ENCODE measurements at regions of chr4 and their contacts with region 1.

Region 1: DNA sequence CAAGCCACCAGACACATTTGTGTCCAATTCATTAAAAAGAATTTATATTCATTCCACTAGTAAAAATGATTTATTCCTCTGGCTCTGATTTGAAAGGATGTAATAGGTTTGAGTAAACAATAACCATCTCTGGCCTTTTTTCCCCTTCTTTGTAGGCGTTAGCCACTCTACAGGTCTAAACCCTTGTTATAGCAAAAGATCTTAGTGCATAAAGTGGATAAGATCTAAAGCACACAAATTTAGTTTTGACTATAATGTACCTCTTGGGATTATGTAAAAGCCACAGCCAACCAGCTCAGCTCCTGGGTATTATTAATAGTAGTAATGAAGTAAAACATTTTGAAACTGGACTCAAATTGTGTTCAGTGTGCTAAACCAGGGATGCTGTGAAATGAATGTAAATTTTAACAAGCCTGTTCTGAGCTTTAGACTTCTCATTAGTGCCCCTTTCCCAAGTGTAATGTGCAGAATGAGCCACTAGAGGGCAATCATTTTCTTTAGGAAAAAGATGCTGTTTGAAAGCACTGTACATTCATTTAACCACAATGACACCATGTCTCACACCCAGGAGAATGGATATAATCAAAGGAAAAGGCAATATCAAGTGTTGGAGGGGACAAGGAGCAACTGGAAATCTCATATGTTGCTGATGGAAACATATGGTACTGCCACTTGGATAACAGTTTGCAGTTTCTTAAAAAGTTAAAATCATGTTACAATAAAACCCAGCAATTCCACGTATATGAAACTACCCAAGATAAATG is 69.7 kb downstream of the KLHL8 start:
- DNase-seq: peak; percentile 45
- CTCF ChIP-seq: peak; percentile 84

Region 2: DNA sequence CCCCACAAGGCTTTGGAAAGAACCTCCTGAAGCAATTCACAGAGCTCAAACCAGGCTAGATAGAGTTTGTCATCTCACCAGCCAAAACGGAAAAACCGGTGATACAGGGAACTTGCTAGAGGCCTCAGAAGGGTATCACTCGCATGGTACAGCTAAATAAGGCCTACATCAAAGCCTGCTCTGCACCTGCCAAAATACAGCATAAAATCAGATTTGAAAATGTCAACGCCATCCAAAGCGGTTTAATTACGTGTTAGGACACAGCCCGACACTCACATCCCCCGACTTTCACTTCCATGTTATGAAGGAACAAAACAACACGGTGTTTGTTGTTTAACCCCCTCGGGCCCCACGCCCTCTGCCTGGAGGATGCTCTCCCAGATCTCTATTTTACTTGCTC is 855.8 kb before region 1 on chr4:
- CTCF ChIA-PET with region 1: no interaction called
- POLR2A ChIA-PET with region 1: no interaction called
- DNase-seq: peak; percentile 7
- CTCF ChIP-seq: no peak

Region 3: GRCh38 chr4:87133183-87133582 is 17.5 kb before region 1 on chr4:
- CTCF ChIA-PET with region 1: interaction called, 20 read pairs
- POLR2A ChIA-PET with region 1: no interaction called
- DNase-seq: no peak
- CTCF ChIP-seq: no peak

Region 4: DNA sequence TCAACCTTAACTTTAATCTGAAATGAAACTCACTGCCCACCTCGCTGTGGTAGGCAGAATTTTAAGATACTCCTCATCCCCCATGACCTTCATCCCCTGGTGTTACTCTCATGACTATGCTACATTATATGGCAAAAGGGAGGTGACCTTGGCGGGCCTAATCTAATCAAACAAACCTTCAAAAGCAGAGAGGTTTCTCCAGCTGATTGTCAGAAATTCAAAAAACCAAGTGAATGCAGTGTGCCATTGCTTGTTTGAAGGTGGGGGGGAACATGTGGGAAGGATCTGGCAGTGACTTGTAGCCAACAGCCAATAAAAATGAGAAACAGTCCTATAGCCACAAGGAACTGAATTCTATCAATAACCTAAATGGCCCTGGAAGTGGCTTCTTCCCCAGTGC is 21.3 kb after region 1 on chr4:
- CTCF ChIA-PET with region 1: interaction called, 11 read pairs
- POLR2A ChIA-PET with region 1: no interaction called
- DNase-seq: no peak
- CTCF ChIP-seq: no peak

Region 5: DNA sequence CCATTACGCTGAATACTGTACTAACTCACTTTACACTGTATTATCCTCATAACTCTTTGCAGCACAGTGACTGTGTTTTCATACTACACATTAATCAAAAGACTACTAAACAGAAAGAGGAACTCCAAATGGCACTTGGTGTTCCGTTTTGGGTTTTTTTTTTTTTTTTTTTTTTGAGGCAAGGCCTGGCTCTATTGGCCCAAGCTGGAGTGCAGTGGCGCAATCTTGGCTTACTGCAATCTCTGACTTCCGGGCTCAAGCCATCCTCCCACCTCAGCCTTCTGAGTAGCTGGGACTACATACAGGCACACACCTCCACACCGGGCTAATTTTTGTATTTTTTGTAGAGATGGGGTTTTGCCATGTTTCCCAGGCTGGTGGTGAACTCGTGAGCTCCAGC is 59.0 kb after region 1 on chr4:
- CTCF ChIA-PET with region 1: interaction called, 13 read pairs
- POLR2A ChIA-PET with region 1: no interaction called
- DNase-seq: peak; percentile 54
- CTCF ChIP-seq: no peak

Region 6: DNA sequence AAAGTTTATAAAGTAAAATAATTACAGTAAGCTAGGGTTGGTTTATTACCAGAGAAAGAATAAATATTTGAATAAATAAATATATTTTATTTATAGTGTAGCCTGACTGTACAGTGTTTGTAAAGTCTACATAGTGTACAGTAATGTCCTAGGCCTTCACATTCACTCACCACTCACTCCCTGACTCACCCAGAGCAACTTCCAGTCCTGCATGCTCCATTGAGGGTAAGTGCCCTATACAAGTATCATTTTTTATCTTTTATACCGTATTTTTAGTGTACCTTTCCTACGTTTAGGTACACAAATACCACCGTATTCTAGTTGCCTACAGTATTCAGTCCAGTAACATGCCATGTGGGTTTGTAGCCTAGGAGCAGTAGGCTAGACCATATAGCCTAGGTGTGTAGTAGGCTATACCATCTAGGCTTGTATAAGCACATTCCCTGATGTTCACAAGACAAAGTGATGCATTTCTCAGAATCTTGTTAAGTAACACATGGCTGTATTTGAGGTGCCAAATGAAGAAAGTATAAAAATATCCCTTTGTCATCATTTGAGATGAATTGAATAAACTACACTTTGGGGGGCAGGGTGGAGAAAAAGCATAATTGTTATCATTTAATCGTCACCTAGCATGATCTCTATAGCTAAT is 84.5 kb after region 1 on chr4:
- CTCF ChIA-PET with region 1: interaction called, 85 read pairs
- POLR2A ChIA-PET with region 1: no interaction called
- DNase-seq: no peak
- CTCF ChIP-seq: no peak